H1 (cell line): ENCODE measurements at regions of chr6 and their contacts with region 1.

Region 1: DNA sequence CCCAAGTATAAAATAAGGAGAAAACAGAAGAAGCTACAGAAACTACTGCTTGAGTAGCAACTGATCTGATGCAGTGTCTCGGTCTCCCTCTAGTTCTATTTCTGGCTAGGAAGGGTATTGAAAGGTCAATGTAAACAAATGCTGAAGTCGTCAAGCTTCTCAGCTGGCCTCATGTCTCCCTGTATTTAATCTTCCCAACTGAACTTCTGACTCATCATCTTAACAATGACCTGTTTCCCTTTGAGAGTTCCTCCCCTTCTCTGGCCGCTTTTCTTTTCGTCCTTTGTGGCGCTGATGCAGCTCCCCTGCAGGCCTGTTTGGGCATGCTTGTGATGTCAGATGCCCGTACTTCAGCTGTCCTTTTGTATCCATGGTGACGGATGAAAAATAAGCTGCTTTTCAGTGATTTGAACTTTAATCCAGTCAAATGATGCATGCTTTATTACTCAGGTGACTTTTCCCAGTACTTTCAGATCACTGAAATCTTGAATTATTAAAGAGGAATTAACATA is 7.8 kb upstream of the LCA5 start:
- DNase-seq: peak; percentile 52 to 83
- H3K4me3 ChIP-seq: peak overlapping the region in 1 of 4 experiments; percentile 20; a peak in 1 of 8 replicates
- H3K27ac ChIP-seq: no peak overlapping the region
- H3K4me1 ChIP-seq: peaks cover 4 to 12% (median 5%) of the 10 kb centered on the region in 4 experiments; a peak in 6 of 7 replicates
- H3K27me3 ChIP-seq: no peaks in the 10 kb centered on the region
- CTCF ChIP-seq: peak; percentile 42 to 65 (median 44)
- EP300 ChIP-seq: peak in 1 of 2 experiments; percentile 86; a peak in 2 of 3 replicates
- POLR2A ChIP-seq: no peak
- RAD21 ChIP-seq: peak; percentile 43 to 59

Region 2: DNA sequence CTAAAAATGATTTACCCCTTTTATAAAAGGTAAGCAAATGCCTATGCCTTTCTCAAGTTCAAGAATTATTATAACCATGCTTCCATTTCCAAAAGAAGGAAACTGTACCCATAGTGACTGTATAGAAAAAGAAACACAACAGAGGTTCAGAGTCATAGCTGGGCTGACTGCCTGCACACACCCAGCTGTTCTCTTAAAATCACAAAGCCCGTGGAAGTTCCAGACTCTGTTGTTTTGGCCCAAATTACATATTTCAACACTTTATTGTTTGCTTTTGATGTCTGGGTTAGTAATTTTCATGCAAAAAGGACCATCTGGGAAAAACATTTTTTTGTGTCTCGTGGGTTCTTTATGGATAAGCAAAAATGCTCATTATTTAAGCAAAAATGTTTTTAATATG is 107.0 kb before region 1 on chr6:
- CTCF ChIA-PET with region 1: no interaction called
- POLR2A ChIA-PET with region 1: no interaction called
- DNase-seq: no peak
- H3K4me3 ChIP-seq: no peak overlapping the region
- H3K27ac ChIP-seq: no peak overlapping the region
- H3K4me1 ChIP-seq: no peaks in the 10 kb centered on the region
- H3K27me3 ChIP-seq: no peaks in the 10 kb centered on the region
- CTCF ChIP-seq: no peak
- EP300 ChIP-seq: no peak
- POLR2A ChIP-seq: no peak
- RAD21 ChIP-seq: no peak

Region 3: GRCh38 chr6:79557673-79558467 is 12.9 kb after region 1 on chr6:
- CTCF ChIA-PET with region 1: interaction called, 12 read pairs
- POLR2A ChIA-PET with region 1: no interaction called
- DNase-seq: no peak
- H3K4me3 ChIP-seq: no peak overlapping the region
- H3K27ac ChIP-seq: no peak overlapping the region
- H3K4me1 ChIP-seq: no peaks in the 10 kb centered on the region
- H3K27me3 ChIP-seq: no peaks in the 10 kb centered on the region
- CTCF ChIP-seq: no peak
- EP300 ChIP-seq: no peak
- POLR2A ChIP-seq: no peak
- RAD21 ChIP-seq: no peak

Region 4: GRCh38 chr6:79694625-79695343 is 149.8 kb after region 1 on chr6:
- CTCF ChIA-PET with region 1: no interaction called
- POLR2A ChIA-PET with region 1: no interaction called
- DNase-seq: no peak
- H3K4me3 ChIP-seq: no peak overlapping the region
- H3K27ac ChIP-seq: no peak overlapping the region
- H3K4me1 ChIP-seq: peaks cover 0 to 2% (median under 1%) of the 10 kb centered on the region in 4 experiments; a peak in 2 of 7 replicates
- H3K27me3 ChIP-seq: no peaks in the 10 kb centered on the region
- CTCF ChIP-seq: peak; percentile 52 to 77 (median 71)
- EP300 ChIP-seq: no peak
- POLR2A ChIP-seq: no peak
- RAD21 ChIP-seq: peak; percentile 53 to 59